Mammary epithelial cell (primary cell): ENCODE measurements at regions of chr1 and their contacts with region 1.

Region 1: GRCh38 chr1:156500797-156501499 is 373 bp upstream of the MEF2D start:
- DNase-seq: peak; percentile 94
- H3K4me3 ChIP-seq: peak overlapping the region; percentile 75 to 95 (median 84)
- H3K27ac ChIP-seq: peak overlapping the region; percentile 93
- H3K4me1 ChIP-seq: peaks cover 58% of the 10 kb centered on the region
- H3K27me3 ChIP-seq: no peaks in the 10 kb centered on the region
- CTCF ChIP-seq: peak; percentile 28 to 66

Region 2: DNA sequence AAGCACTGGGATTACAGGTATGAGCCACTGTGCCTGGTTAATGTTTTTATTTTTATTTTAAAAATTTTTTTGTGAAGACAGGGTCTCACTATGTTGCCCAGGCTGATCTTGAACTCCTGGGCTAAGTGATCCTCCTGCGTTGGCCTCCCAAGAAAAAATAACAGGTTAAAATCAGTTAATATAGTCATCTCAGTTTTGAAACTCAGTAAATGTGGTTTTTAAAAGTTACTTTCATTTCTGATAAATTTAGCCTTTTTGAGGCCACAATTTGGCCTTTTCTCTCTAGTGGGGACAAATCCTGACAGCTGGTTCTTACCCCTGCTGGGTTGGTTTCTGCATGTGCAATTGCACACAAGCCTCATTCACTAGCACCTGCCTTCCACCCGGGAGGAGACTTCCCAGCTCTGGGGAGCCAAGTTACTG is 274.8 kb before region 1 on chr1:
- CTCF ChIA-PET with region 1: no interaction called
- dilution Hi-C with region 1: no loop called
- in situ Hi-C with region 1: no loop called
- intact Hi-C with region 1: no loop called
- DNase-seq: no peak
- H3K4me3 ChIP-seq: no peak overlapping the region
- H3K27ac ChIP-seq: no peak overlapping the region
- H3K4me1 ChIP-seq: peaks cover 12% of the 10 kb centered on the region
- H3K27me3 ChIP-seq: no peaks in the 10 kb centered on the region
- CTCF ChIP-seq: no peak

Region 3: DNA sequence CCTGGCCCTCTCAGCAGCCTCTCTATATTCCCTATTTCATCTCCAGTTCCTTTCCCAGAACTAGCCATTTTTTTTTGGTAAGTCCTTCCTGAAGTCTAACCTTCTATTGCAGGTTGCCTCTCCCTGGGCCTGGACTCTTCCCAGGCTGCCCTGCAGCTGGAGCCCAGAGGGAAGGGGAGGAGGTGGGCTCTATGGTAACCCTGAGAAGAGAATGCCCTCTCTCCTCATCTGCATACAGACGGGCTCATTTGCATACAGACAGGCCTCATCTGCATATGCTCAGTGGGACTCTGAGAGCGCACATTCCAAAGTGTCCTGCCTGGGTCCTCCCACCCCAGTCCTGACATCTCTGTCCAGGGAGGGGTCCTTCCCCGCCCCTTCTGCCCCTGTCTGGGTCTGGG is 99.3 kb before region 1 on chr1:
- CTCF ChIA-PET with region 1: no interaction called
- dilution Hi-C with region 1: no loop called
- in situ Hi-C with region 1: no loop called
- intact Hi-C with region 1: no loop called
- DNase-seq: no peak
- H3K4me3 ChIP-seq: no peak overlapping the region
- H3K27ac ChIP-seq: no peak overlapping the region
- H3K4me1 ChIP-seq: no peaks in the 10 kb centered on the region
- H3K27me3 ChIP-seq: peaks cover 2% of the 10 kb centered on the region
- CTCF ChIP-seq: no peak

Region 4: GRCh38 chr1:156571949-156572662 is 71.2 kb after region 1 on chr1 and contains the start of gene IQGAP3:
- CTCF ChIA-PET with region 1: interaction called, 6 read pairs
- dilution Hi-C with region 1: no loop called
- in situ Hi-C with region 1: no loop called
- intact Hi-C with region 1: loop called (anchors 5 kb)
- DNase-seq: peak; percentile 81
- H3K4me3 ChIP-seq: peak within 1 kb of the TSS; percentile 66 to 88 (median 76)
- H3K27ac ChIP-seq: peak within 1 kb of the TSS; percentile 76
- H3K4me1 ChIP-seq: peaks cover 16% of the 10 kb centered on the region
- H3K27me3 ChIP-seq: no peaks in the 10 kb centered on the region
- CTCF ChIP-seq: no peak
- total RNA-seq, gene IQGAP3: 1.3 to 35.7 TPM